ENCODE measurements at regions of chr9 and their contacts with region 1.

Region 1: DNA sequence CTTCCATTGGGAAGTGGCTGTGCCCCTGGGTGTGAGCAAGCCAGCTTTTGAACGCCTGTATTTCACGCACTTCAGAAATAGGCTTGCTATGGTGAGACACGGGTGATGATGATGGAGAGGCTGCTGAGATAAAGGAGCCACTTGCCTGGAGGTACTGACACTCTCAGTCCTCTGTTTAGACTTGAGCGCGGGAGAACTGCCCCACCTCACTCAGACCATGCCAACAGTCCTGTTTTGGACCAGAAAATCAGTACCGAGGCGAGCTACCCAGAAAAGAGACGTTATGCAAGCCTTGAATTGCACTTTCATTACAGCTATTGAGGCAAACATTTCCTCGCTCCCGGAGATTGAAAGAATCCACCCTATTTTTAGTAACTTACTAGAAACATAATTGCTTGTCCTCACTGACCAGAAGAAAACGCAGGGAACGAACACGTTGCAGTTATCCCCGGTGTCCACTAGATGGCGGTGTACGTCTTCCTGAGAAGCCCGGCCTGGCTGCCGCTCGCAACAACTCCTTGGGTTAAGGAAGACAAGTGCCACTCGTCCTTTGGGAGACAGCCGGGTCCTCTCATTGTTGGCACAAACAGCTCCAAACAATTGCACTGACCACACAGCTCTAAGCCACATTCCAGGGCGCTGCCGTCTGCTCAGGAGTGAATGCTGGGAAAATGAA is 142.4 kb downstream of the PSAT1 start:
- DNase-seq: peak; percentile 66
- ATAC-seq: peak; percentile 79
- H3K4me3 ChIP-seq: no peak overlapping the region
- H3K27ac ChIP-seq: no peak overlapping the region
- H3K4me1 ChIP-seq: no peaks in the 10 kb centered on the region
- H3K27me3 ChIP-seq: no peaks in the 10 kb centered on the region; a peak in 1 of 5 replicates
- CTCF ChIP-seq: peak; percentile 92
- EP300 ChIP-seq: no peak
- POLR2A ChIP-seq: no peak
- RAD21 ChIP-seq: peak; percentile 63

Region 2: DNA sequence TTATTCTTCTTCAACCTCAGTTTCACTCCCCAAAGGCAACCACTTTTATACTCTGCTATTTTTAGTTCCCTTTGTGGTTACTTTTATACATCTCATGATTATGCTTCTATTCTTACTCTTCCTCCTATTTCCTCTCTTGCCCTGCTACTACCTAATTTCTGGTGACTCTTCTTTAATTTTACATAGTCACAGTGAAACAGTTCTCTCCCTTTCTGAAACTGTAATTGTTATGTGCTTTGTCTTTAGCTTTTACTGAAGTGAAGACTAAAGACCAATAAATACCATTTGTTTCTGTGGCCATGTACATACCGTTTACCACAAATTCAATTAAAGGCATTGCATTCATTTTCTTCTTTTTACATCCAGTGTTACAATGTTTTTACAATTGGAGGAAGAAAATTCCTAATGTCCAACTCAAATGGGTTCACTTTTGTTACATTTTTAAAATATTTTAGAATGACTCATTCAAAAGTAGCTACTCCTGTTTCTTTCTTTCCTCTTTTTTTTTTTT is 268.2 kb after region 1 on chr9:
- CTCF ChIA-PET with region 1: no interaction called
- POLR2A ChIA-PET with region 1: no interaction called
- in situ Hi-C with region 1: no loop called
- intact Hi-C with region 1: loop called (anchors 1 kb)
- DNase-seq: no peak
- ATAC-seq: no peak
- H3K4me3 ChIP-seq: no peak overlapping the region
- H3K27ac ChIP-seq: no peak overlapping the region
- H3K4me1 ChIP-seq: no peaks in the 10 kb centered on the region
- H3K27me3 ChIP-seq: no peaks in the 10 kb centered on the region
- CTCF ChIP-seq: no peak
- EP300 ChIP-seq: no peak
- POLR2A ChIP-seq: no peak
- RAD21 ChIP-seq: no peak

Region 3: DNA sequence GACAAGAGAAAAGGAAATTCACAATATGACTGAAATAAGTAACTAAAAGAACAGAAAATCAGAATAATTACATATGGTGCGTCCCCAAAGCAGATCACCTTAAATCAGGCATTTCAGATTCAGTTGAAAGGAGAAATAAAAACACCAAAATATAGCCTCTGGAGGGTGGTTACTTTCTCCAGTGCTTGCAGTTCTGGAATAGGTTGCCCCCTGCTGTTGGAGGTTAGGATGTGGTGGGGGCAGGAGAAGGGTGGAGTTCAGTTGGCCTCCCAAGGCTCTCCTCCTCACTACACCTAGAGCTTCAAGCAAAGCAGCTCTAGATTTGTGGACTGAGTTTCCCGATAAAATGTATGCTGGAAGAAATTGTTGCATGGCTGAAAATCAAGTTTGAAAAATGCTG is 794.2 kb after region 1 on chr9:
- CTCF ChIA-PET with region 1: no interaction called
- POLR2A ChIA-PET with region 1: no interaction called
- in situ Hi-C with region 1: no loop called
- intact Hi-C with region 1: loop called (anchors 1 kb)
- DNase-seq: peak; percentile 33
- ATAC-seq: peak; percentile 90
- H3K4me3 ChIP-seq: no peak overlapping the region
- H3K27ac ChIP-seq: no peak overlapping the region
- H3K4me1 ChIP-seq: no peaks in the 10 kb centered on the region
- H3K27me3 ChIP-seq: no peaks in the 10 kb centered on the region
- CTCF ChIP-seq: peak; percentile 54
- EP300 ChIP-seq: no peak
- POLR2A ChIP-seq: no peak
- RAD21 ChIP-seq: no peak